ENCODE measurements at regions of chr22 and their contacts with region 1.

Region 1: DNA sequence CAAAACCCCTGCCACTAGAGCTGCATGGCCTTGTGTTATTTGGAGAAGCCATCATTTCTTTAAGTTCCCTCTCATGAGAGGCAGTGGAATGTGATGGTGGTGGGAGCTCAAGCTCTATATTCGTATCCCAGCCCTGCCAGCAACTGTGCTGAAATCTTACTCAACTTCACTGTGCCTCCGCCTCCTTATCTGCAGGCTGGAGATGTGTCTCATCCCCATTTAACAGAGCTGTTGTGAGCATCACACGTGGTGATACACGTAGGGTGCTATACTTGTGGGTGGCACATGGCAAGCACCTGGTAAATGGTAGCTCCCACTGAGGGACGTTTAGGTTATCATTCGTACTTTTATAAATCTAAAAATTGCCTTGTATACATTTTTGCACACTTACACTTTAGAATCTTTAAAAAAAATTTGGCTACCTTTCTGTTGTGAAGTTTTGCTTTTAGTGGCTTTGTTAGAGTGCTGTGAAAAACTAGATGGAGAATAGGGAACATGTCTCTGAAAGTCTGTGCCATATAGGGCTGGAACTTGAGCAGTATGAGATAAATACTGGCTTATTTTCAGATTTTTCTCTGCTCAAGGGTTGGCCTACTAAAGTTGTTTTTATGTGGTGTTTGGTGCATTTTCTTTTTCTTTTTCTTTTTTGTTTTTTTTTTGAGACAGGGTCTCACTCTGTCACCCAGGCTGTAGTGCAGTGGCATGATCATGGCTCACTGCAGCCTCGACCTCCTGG is 23.2 kb downstream of the TNRC6B start:
- DNase-seq: no peak
- H3K4me3 ChIP-seq: no peak overlapping the region
- H3K27ac ChIP-seq: no peak overlapping the region
- H3K4me1 ChIP-seq: peaks cover 17% of the 10 kb centered on the region
- H3K27me3 ChIP-seq: no peaks in the 10 kb centered on the region
- CTCF ChIP-seq: no peak

Region 2: DNA sequence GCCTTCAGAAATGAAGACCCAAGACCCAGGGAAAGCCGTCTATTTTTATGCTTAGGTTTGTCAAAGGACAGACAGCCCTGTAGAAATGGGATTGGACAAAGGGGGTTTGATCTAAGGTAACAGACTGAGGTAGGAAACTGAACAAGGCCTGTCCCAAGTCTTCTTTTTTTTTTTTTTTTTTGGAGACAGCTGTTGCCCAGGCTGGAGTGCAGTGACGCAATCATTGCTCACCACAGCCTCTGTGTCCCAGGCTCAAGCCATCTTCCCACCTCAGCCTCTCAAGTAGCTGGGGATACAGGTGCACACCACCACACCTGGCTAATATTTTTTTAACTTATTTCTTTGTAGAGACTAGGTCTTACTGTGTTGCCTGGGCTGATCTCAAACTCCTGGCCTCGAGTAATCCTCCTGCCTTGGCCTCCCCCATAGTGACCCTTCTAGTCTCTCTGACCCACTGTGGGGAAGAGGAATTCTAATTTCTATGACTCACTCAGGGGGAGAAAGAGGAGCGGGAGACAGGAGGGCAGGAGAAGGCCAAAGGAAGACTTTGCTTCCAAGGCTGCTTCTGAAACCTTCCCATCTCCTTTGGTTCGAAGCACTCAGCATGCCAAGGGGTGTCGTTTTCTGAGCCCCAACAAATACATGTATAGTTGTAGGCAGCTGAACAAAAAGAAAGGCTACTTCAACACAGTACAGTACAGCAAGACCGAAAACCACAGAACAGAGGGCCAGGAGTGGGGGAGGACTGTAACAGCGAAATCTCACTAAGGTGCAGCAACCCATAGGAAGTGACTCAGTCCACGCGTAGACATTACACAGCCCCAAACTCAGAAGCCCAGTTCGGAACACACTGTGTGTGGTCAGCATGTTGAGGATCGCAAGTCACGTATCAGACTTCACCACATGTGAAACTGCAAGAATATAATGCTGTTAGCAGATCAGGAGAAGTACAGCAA is 239.9 kb before region 1 on chr22:
- CTCF ChIA-PET with region 1: no interaction called
- POLR2A ChIA-PET with region 1: interaction called, 10 read pairs
- intact Hi-C with region 1: no loop called
- DNase-seq: no peak
- H3K4me3 ChIP-seq: no peak overlapping the region
- H3K27ac ChIP-seq: no peak overlapping the region
- H3K4me1 ChIP-seq: no peaks in the 10 kb centered on the region
- H3K27me3 ChIP-seq: peaks cover 4% of the 10 kb centered on the region
- CTCF ChIP-seq: no peak